Caco-2 (cell line): ENCODE measurements at regions of chr1 and their contacts with region 1.

Region 1: DNA sequence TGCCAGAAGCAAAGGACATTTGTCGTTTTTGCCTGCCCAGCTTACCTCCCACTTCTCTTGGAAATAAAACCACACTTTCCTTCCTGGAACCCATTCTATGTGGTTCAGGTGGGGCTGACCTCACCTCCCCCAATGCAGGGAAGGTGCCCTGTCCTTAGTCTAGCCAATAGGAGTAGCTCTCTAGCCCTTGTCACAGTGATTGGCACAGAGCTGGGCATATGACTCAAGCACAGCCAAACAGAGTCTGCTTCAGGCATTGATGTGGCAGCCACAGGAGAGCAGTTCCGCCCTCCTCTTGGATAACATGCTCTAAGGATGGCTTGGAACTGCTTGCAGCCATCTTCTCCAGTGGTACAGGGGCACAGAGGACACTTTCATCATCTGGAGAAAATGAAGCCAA is 134.0 kb downstream of the LRIG2 start:
- DNase-seq: peak; percentile 30 to 56
- H3K4me3 ChIP-seq: no peak overlapping the region
- H3K4me3 Mint-ChIP-seq: peak overlapping the region; percentile 49
- H3K27ac Mint-ChIP-seq: peak overlapping the region; percentile 84
- H3K4me1 ChIP-seq: peaks cover 56% of the 10 kb centered on the region
- H3K4me1 Mint-ChIP-seq: peaks cover 45% of the 10 kb centered on the region
- H3K27me3 ChIP-seq: no peaks in the 10 kb centered on the region
- H3K27me3 Mint-ChIP-seq: no peaks in the 10 kb centered on the region
- CTCF ChIP-seq: no peak

Region 2: DNA sequence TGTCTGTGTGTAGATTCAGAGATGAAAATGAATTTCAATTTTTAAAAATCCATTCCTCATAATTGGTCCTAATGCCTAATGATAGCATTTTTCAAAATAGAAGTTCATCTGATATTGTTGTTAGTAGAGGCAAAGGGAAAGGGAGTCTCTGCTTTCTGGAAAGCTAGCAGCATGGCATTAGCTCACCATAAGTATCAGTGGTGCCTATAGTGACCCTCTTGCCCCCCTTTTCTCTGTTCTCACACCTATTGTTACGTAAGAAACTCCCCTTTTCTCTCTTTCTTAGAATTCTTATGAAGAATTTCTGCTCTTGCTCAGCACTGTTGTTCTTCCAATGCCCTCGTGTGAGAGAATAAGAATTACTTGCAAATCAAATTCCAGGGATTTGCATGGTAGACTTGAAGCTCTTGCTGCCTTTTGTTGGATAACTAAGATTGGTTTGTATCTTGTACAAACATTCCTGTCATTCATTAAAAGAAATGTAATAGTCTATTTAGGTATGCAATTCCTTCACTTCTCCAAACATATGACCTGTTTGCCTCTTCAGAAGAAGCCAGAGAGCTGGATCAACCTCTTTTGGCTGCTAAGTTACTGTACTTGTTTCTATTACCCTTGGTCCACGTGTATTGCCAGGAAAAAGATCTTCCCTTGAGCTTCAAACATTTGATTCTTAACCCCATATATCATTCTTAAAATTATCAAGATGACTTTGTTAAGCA is 114.1 kb after region 1 on chr1:
- CTCF ChIA-PET with region 1: no interaction called
- POLR2A ChIA-PET with region 1: no interaction called
- intact Hi-C with region 1: loop called (anchors 5 kb)
- DNase-seq: peak in 1 of 2 experiments; percentile 42
- H3K4me3 ChIP-seq: no peak overlapping the region
- H3K4me3 Mint-ChIP-seq: no peak overlapping the region
- H3K27ac Mint-ChIP-seq: no peak overlapping the region
- H3K4me1 ChIP-seq: peaks cover 38% of the 10 kb centered on the region
- H3K4me1 Mint-ChIP-seq: peaks cover 13% of the 10 kb centered on the region
- H3K27me3 ChIP-seq: no peaks in the 10 kb centered on the region
- H3K27me3 Mint-ChIP-seq: no peaks in the 10 kb centered on the region
- CTCF ChIP-seq: no peak

Region 3: GRCh38 chr1:113677250-113678158 is 470.5 kb after region 1 on chr1:
- CTCF ChIA-PET with region 1: no interaction called
- POLR2A ChIA-PET with region 1: no interaction called
- intact Hi-C with region 1: no loop called
- DNase-seq: peak in 1 of 2 experiments; percentile 39
- H3K4me3 ChIP-seq: no peak overlapping the region
- H3K4me3 Mint-ChIP-seq: no peak overlapping the region
- H3K27ac Mint-ChIP-seq: no peak overlapping the region
- H3K4me1 ChIP-seq: 0 out of 2 replicates have a peak, but pooled peaks cover 10% of the 10 kb centered on the region
- H3K4me1 Mint-ChIP-seq: peaks cover 23% of the 10 kb centered on the region
- H3K27me3 ChIP-seq: no peaks in the 10 kb centered on the region
- H3K27me3 Mint-ChIP-seq: no peaks in the 10 kb centered on the region
- CTCF ChIP-seq: peak; percentile 26 to 28